ENCODE measurements at regions of chr16 and their contacts with region 1.

Region 1: DNA sequence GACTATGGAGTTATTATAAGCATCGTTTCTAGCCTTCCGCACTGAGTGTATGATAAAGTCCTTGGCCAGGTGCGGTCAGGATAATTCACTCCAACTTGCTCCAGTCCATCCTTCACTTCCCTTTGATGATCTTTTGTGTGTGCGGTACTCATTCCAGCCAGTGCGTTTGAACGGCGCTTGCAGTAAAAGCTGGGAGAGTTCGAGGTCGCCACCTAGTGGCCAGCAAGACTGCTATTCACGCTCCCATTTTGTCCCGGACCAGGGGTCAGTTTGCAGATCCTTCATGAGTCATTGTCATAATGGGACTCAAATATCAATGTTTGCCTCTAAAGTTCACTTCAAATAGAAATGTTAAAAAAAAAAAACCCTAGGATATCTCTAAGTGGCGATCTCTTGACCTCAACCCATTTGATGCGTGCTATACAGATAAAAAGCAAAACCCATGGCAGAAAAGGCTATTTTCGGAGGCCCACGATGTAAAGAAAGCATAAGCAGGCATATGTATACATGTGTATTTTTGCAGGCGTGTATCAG is 417.1 kb downstream of the TMEM114 start:
- H3K4me3 Mint-ChIP-seq: no peak overlapping the region
- H3K27ac Mint-ChIP-seq: no peak overlapping the region
- H3K4me1 Mint-ChIP-seq: no peaks in the 10 kb centered on the region
- H3K27me3 Mint-ChIP-seq: peaks cover 7% of the 10 kb centered on the region

Region 2: GRCh38 chr16:7268182-7268581 is 905.0 kb before region 1 on chr16:
- intact Hi-C with region 1: loop called (anchors 5 kb)
- H3K4me3 Mint-ChIP-seq: no peak overlapping the region
- H3K27ac Mint-ChIP-seq: no peak overlapping the region
- H3K4me1 Mint-ChIP-seq: no peaks in the 10 kb centered on the region
- H3K27me3 Mint-ChIP-seq: no peaks in the 10 kb centered on the region